T-cell (primary cell): ENCODE measurements at regions of chr4 and their contacts with region 1.

Region 1: GRCh38 chr4:130172156-130172555 is 1076.2 kb downstream of the C4orf33 start:
- DNase-seq: no peak
- ATAC-seq: no peak
- H3K4me3 ChIP-seq: no peak overlapping the region
- H3K4me3 Mint-ChIP-seq: no peak overlapping the region
- H3K27ac ChIP-seq: no peak overlapping the region
- H3K27ac Mint-ChIP-seq: no peak overlapping the region
- H3K4me1 ChIP-seq: no peaks in the 10 kb centered on the region
- H3K4me1 Mint-ChIP-seq: no peaks in the 10 kb centered on the region
- H3K27me3 ChIP-seq: no peaks in the 10 kb centered on the region
- H3K27me3 Mint-ChIP-seq: no peaks in the 10 kb centered on the region

Region 2: DNA sequence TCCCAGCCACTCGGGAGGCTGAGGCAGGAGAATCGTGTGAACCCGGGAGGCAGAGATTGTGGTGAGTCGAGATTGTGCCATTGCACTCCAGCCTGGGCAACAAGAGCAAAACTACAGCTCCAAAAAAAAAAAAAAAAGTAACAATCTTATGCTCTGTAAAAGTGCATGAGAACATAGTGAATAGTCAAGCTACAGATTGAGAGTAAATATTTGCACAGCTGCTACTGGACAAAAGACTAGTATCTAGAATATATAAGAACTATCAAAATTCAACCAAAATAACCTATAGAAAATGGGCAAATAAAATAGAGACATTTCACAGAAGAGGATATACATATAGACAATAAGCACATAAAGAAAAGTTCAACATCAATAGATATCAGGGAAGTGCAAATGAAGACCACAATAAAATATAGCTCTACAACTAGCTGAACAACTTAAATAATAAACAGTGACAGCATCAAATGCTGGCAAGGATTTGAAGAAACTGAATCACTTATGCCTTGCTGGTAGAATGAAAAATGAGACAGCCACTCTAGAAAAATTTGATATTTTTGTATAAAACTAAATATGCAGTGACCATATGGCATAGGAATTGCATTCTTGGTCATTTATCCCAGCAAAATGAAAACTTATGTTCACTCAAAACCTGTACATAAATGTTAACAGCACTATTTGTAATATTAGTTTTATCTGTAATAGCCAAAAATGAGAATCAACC is 25.6 kb after region 1 on chr4:
- CTCF ChIA-PET with region 1: no interaction called
- POLR2A ChIA-PET with region 1: no interaction called
- DNase-seq: no peak
- ATAC-seq: no peak
- H3K4me3 ChIP-seq: no peak overlapping the region
- H3K4me3 Mint-ChIP-seq: no peak overlapping the region
- H3K27ac ChIP-seq: no peak overlapping the region
- H3K27ac Mint-ChIP-seq: no peak overlapping the region
- H3K4me1 ChIP-seq: no peaks in the 10 kb centered on the region
- H3K4me1 Mint-ChIP-seq: no peaks in the 10 kb centered on the region
- H3K27me3 ChIP-seq: no peaks in the 10 kb centered on the region
- H3K27me3 Mint-ChIP-seq: no peaks in the 10 kb centered on the region

Region 3: GRCh38 chr4:130210864-130211263 is 38.7 kb after region 1 on chr4:
- CTCF ChIA-PET with region 1: no interaction called
- POLR2A ChIA-PET with region 1: interaction called in 1 of 2 experiments, 10 read pairs
- DNase-seq: no peak
- ATAC-seq: no peak
- H3K4me3 ChIP-seq: no peak overlapping the region
- H3K4me3 Mint-ChIP-seq: no peak overlapping the region
- H3K27ac ChIP-seq: no peak overlapping the region
- H3K27ac Mint-ChIP-seq: no peak overlapping the region
- H3K4me1 ChIP-seq: no peaks in the 10 kb centered on the region
- H3K4me1 Mint-ChIP-seq: no peaks in the 10 kb centered on the region
- H3K27me3 ChIP-seq: no peaks in the 10 kb centered on the region
- H3K27me3 Mint-ChIP-seq: no peaks in the 10 kb centered on the region

Region 4: DNA sequence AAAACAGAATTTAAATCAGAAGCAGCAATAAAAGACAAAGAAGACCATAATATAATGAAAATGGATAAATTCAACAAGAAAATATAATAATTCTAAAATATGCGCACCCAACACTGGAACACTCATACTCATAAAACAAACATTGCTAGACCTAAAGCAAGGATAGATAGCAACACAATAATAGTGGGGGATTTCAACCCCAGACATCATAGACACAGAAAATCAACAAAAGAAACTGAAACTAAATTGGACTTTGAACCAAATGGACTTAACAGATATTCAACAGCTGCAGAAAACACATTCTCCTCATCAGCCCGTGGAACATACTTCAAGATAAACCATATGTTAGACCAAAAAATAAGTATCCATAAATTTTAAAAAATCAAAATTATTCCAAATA is 476.4 kb after region 1 on chr4:
- CTCF ChIA-PET with region 1: no interaction called
- POLR2A ChIA-PET with region 1: no interaction called
- DNase-seq: no peak
- ATAC-seq: no peak
- H3K4me3 ChIP-seq: no peak overlapping the region
- H3K4me3 Mint-ChIP-seq: no peak overlapping the region
- H3K27ac ChIP-seq: no peak overlapping the region
- H3K27ac Mint-ChIP-seq: no peak overlapping the region
- H3K4me1 ChIP-seq: no peaks in the 10 kb centered on the region
- H3K4me1 Mint-ChIP-seq: no peaks in the 10 kb centered on the region
- H3K27me3 ChIP-seq: no peaks in the 10 kb centered on the region
- H3K27me3 Mint-ChIP-seq: no peaks in the 10 kb centered on the region